ENCODE measurements at regions of chr17 and their contacts with region 1.

Region 1: DNA sequence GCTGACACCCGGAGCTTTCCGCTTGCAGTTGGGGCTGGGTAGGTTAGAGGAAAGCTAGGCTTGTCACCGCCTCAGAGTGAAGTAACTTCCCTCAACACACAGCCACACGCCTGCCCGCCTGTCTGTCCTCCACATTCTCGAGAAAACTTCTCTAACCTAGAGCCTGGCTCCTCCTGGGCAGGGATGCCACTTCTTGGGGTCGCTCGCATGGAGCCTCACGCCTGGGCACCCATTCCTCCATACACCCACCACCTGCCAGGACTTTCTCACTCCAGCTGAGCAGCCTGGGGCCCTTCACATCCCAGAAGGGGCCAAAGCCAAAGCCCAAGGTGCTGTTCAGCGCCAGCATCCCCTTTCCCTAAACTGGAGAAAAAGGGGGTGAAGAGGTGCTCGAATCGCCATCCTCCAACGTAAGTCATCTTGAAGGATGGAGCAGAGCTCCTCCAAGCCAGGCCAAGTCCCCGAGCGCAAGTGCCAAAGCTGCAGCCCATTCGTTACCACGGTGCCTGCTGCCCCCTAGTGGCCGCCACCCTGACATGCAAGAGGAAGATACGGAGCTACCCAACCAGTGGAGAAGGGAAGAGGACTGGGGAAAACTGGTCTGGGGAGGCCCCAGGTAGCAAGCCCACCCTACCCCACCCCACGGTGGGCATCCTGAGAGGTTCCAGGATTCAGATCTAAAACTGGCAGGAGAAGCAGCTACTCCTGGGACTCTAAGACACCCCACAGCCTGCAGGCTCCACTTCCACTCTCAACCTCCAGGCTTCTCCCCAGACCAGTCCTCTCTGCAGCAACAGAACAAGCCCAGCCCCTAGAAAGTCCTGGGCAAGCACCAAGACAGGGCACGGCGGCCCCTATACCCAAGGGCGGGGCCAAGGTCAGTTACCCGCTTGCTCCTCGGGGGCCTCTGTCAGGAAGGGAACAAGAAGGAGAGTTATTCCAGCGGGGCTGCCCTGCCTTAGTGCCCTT is 63.1 kb downstream of the MYO18A start:
- DNase-seq: peak; percentile 87
- ATAC-seq: peak; percentile 87
- H3K4me3 Mint-ChIP-seq: no peak overlapping the region
- H3K27ac Mint-ChIP-seq: peak overlapping the region; percentile 34
- H3K4me1 Mint-ChIP-seq: peaks cover 11% of the 10 kb centered on the region
- H3K27me3 Mint-ChIP-seq: no peaks in the 10 kb centered on the region
- CTCF ChIP-seq: peak; percentile 97

Region 2: DNA sequence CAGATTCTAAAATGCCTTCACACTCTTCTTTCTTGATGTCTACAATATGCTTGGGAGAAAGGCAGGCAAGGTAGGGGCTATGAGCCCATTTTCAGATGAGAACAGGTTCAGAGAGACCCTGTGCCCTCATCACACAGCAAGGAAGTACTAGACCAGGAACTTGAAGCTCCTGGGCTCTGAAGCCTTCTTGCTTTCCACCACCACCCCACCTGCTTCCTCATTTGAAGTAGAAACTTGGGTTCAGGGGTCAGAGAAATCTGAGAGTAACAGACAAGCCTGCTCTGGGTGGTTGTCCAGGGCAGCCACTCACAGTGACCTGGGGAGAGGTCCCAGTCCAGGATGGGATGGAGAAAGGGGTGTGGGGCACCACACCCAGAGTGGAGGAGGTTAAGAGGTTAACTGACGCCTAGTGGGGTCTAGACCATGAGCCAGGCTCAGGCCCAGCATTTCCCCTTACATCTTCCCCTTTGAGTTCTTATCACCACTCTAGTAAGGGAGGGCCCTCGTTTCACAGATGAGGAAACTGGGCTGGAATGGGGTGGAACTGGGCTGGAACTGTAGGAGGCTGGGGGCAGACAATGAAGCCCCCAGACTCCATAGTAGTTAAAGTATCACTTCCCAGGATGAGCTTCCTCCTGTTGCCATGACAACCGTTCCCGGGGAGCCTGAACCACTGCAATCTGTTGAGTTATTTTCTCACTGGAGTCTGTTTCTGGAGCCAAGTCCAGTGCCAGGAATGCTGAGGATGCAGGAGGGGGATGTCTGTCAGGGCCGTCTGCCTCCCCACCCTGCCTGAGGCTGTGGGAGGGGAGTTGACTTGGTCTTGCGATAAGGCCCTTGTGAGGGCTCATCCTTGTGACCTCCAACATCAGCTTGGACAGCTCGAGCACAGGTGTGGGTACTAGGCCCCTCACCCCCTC is 149.6 kb before region 1 on chr17:
- CTCF ChIA-PET with region 1: interaction called, 353 read pairs
- POLR2A ChIA-PET with region 1: interaction called, 3 read pairs
- intact Hi-C with region 1: loop called (anchors 2 kb)
- DNase-seq: no peak
- ATAC-seq: no peak
- H3K4me3 Mint-ChIP-seq: no peak overlapping the region
- H3K27ac Mint-ChIP-seq: no peak overlapping the region
- H3K4me1 Mint-ChIP-seq: no peaks in the 10 kb centered on the region
- H3K27me3 Mint-ChIP-seq: peaks cover 11% of the 10 kb centered on the region
- CTCF ChIP-seq: no peak

Region 3: GRCh38 chr17:29005936-29006511 is 111.1 kb before region 1 on chr17 and contains the start of gene SEZ6:
- CTCF ChIA-PET with region 1: interaction called, 40 read pairs
- POLR2A ChIA-PET with region 1: no interaction called
- intact Hi-C with region 1: no loop called
- DNase-seq: peak; percentile 77
- ATAC-seq: peak; percentile 95
- H3K4me3 Mint-ChIP-seq: no peak within 1 kb of the TSS
- H3K27ac Mint-ChIP-seq: no peak within 1 kb of the TSS
- H3K4me1 Mint-ChIP-seq: peaks cover 2% of the 10 kb centered on the region
- H3K27me3 Mint-ChIP-seq: peaks cover 49% of the 10 kb centered on the region
- CTCF ChIP-seq: no peak
- total RNA-seq, gene SEZ6: not detected

Region 4: GRCh38 chr17:29039764-29040598 is 77.1 kb before region 1 on chr17:
- CTCF ChIA-PET with region 1: interaction called, 19 read pairs
- POLR2A ChIA-PET with region 1: no interaction called
- intact Hi-C with region 1: no loop called
- DNase-seq: no peak
- ATAC-seq: no peak
- H3K4me3 Mint-ChIP-seq: no peak overlapping the region
- H3K27ac Mint-ChIP-seq: no peak overlapping the region
- H3K4me1 Mint-ChIP-seq: peaks cover 9% of the 10 kb centered on the region
- H3K27me3 Mint-ChIP-seq: peaks cover 6% of the 10 kb centered on the region
- CTCF ChIP-seq: no peak

Region 5: DNA sequence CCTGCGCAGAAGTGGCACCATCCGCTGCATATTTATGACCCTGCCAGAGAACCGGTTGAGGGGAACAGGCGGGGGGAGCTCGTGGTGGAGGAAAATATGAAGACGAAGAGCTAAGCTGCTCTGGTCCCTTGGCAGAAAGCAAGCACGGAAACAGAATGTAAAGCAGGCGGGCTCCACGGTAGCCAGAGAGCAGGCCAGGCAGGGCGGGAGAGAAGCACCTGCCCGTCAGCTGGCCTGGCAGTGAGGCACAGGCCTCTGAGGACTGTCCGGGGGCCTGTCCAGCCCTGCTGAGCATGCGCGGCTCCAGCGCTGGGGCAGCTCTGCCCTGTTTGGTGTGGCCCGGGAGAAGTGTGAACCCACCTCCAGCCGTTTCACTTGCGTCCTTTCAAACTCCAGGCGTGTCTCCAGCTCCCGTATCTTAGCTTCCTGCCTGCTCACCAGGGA is 27.5 kb before region 1 on chr17:
- CTCF ChIA-PET with region 1: interaction called, 33 read pairs
- POLR2A ChIA-PET with region 1: interaction called, 5 read pairs
- intact Hi-C with region 1: no loop called
- DNase-seq: no peak
- ATAC-seq: no peak
- H3K4me3 Mint-ChIP-seq: no peak overlapping the region
- H3K27ac Mint-ChIP-seq: no peak overlapping the region
- H3K4me1 Mint-ChIP-seq: no peaks in the 10 kb centered on the region
- H3K27me3 Mint-ChIP-seq: no peaks in the 10 kb centered on the region
- CTCF ChIP-seq: no peak

Region 6: GRCh38 chr17:29180034-29180787 is 63.1 kb after region 1 on chr17 and contains the start of gene MYO18A:
- CTCF ChIA-PET with region 1: interaction called, 27 read pairs
- POLR2A ChIA-PET with region 1: no interaction called
- intact Hi-C with region 1: no loop called
- DNase-seq: peak; percentile 83
- ATAC-seq: peak; percentile 95
- H3K4me3 Mint-ChIP-seq: peak within 1 kb of the TSS; percentile 58
- H3K27ac Mint-ChIP-seq: no peak within 1 kb of the TSS
- H3K4me1 Mint-ChIP-seq: peaks cover 31% of the 10 kb centered on the region
- H3K27me3 Mint-ChIP-seq: no peaks in the 10 kb centered on the region
- CTCF ChIP-seq: peak; percentile 86
- total RNA-seq, gene MYO18A: 27.5 to 29.4 TPM

Region 7: GRCh38 chr17:29233301-29233700 is 116.2 kb after region 1 on chr17:
- CTCF ChIA-PET with region 1: no interaction called
- POLR2A ChIA-PET with region 1: no interaction called
- intact Hi-C with region 1: no loop called
- DNase-seq: no peak
- ATAC-seq: no peak
- H3K4me3 Mint-ChIP-seq: no peak overlapping the region
- H3K27ac Mint-ChIP-seq: no peak overlapping the region
- H3K4me1 Mint-ChIP-seq: no peaks in the 10 kb centered on the region
- H3K27me3 Mint-ChIP-seq: no peaks in the 10 kb centered on the region
- CTCF ChIP-seq: no peak